ENCODE measurements at regions of chr5 and their contacts with region 1.

Region 1: DNA sequence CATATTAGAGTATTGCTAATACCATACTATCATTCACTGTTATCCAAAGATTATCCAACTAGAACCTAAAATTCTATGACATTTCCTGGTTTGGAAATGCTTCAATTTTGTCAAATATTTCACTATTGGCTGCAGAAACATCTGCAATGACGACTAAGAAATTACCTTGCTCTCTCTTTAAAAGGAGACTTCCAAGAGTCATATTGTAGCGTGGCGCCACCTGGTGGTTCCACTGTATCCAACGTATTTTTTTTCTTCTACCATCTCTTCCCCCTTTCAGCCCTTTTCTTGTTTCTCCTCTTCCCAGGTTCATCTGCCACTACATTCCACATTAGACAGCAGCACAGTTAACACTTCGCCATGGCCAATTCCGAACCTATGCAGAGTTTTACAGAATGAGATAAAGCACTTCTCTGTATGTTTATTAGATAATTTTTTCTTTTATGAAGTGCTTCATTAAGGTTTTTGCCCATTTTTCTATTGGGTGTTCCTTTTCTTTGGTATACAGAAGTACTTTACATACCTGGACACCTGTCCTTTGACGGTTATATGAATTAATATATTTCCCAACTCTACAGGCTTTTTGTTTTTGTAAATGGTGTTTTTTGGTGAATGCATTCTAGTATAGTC is 153.5 kb downstream of the CDC42SE2 start:
- DNase-seq: peak; percentile 92
- ATAC-seq: no peak
- H3K4me3 Mint-ChIP-seq: no peak overlapping the region
- H3K27ac Mint-ChIP-seq: peak overlapping the region; percentile 40
- H3K4me1 Mint-ChIP-seq: peaks cover 43% of the 10 kb centered on the region
- H3K27me3 Mint-ChIP-seq: no peaks in the 10 kb centered on the region

Region 2: GRCh38 chr5:130109152-130109551 is 1308.2 kb before region 1 on chr5:
- CTCF ChIA-PET with region 1: no interaction called
- POLR2A ChIA-PET with region 1: no interaction called
- intact Hi-C with region 1: loop called in 1 of 2 experiments (anchors 5 kb)
- DNase-seq: no peak
- ATAC-seq: peak; percentile 49
- H3K4me3 Mint-ChIP-seq: no peak overlapping the region
- H3K27ac Mint-ChIP-seq: no peak overlapping the region
- H3K4me1 Mint-ChIP-seq: peaks cover 4% of the 10 kb centered on the region
- H3K27me3 Mint-ChIP-seq: peaks cover 1% of the 10 kb centered on the region

Region 3: GRCh38 chr5:131068893-131069643 is 348.3 kb before region 1 on chr5:
- CTCF ChIA-PET with region 1: interaction called, 3 read pairs
- POLR2A ChIA-PET with region 1: no interaction called
- intact Hi-C with region 1: loop called in 1 of 2 experiments (anchors 5 kb)
- DNase-seq: peak; percentile 81
- ATAC-seq: peak; percentile 99
- H3K4me3 Mint-ChIP-seq: peak overlapping the region; percentile 16
- H3K27ac Mint-ChIP-seq: peak overlapping the region; percentile 95
- H3K4me1 Mint-ChIP-seq: peaks cover 50% of the 10 kb centered on the region
- H3K27me3 Mint-ChIP-seq: no peaks in the 10 kb centered on the region

Region 4: DNA sequence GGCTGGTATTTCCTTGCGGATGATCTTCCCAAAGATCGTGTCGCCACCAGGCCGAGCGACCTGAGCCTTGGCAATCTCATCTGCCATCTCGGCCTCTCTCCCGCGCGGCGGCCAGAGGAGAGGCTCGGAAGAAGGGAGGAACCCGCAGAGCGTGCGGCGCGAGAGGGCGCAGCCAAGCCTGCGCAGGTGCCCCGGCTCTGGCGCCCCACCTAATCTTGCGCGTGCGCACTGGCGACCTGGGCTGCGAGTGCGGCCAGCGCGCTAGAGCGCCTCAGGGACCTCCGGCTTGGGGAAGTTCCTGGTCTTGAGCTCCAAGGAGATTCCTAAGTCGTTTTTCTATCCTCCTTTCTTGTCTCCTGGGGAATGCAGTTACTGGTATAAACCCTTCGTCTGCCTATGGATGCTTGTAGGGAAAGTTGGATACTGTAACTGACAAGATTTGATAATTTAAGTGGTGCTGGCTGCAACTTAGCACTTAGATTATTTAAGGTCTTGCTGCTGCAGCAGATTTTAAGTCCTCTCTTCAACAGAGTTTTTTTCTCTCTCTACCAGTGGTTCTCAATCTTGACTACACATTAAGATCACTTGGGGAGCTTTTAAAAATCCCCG is 252.1 kb before region 1 on chr5 and contains the start of gene HINT1:
- CTCF ChIA-PET with region 1: interaction called, 4 read pairs
- POLR2A ChIA-PET with region 1: no interaction called
- intact Hi-C with region 1: loop called (anchors 1 to 2 kb)
- DNase-seq: peak; percentile 96
- ATAC-seq: peak; percentile 89
- H3K4me3 Mint-ChIP-seq: peak within 1 kb of the TSS; percentile 83
- H3K27ac Mint-ChIP-seq: peak within 1 kb of the TSS; percentile 99
- H3K4me1 Mint-ChIP-seq: peaks cover 51% of the 10 kb centered on the region
- H3K27me3 Mint-ChIP-seq: no peaks in the 10 kb centered on the region
- total RNA-seq, gene HINT1: 298 to 312 TPM

Region 5: DNA sequence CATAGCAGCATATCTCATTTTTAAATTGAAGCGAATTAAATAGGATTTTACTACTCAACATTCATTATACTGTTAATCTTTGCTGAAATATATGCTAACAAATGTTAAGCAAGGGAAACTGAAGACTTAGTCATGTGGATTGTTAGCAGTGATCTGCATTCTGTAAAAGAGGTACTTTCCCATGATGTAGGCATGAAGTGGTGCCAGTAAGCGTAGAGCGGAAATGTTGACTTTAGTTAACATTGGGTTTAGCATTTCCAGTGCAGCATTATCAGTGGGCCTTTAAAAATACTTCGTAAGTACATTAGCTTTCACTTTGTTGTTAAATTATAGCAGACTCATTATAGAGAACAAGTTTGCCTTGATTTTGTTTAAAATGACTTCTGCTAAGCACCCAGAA is 23.2 kb before region 1 on chr5:
- CTCF ChIA-PET with region 1: interaction called, 15 read pairs
- POLR2A ChIA-PET with region 1: no interaction called
- intact Hi-C with region 1: loop called in 1 of 2 experiments (anchors 2 kb)
- DNase-seq: peak; percentile 68
- ATAC-seq: peak; percentile 68
- H3K4me3 Mint-ChIP-seq: peak overlapping the region; percentile 65
- H3K27ac Mint-ChIP-seq: peak overlapping the region; percentile 97
- H3K4me1 Mint-ChIP-seq: peaks cover 85% of the 10 kb centered on the region
- H3K27me3 Mint-ChIP-seq: no peaks in the 10 kb centered on the region

Measured in activated CD4-positive, alpha-beta T cell treated with anti-CD3 and anti-CD28 coated beads for 36 hours (primary cell).